Right ventricle myocardium inferior (tissue), 1 donor: ENCODE measurements at regions of chr1 and their contacts with region 1.

Region 1: DNA sequence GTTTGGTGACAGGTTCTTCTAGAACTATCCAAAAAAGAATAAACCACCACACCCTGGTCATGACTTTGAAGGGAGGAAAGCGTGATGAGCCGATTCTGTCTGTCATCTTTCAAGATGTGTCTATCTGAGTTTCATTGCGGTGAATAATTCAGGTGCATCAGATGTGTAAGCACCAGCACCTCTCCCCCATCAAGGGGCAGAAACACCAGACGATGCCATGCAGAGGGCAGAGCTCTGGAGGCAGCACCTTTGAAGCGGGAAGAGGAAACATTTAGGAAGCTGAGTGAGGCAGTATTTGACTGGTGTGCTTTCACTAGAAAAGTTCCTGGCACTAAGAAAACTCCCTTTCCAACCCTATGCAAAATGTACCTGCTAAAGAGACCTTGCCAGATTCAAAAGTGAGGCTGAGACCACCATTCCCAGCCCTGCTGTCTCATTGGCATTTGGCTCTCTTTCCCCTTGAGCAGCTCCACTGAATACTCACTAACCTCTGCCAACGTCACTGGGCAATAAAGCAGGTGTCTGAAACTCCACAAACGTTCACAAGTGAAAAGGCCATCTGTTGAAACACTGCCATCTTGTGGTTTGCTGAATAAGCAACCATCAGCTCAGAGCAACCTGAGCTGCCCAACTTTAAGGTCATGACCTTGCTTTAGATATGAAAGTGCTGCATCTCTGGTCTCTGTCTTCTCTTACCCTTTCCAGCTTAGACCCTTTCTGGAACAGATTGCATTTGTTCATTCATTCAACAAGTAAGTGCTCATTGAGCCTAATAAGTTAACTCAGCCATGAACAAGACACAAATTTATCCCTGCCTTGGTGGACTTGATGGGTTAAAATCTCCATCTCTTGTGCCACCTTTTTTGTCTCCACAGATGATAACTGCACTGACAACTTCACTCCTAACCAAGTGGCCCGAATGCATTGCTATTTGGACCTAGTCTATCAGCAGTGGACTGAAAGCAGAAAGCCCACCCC is 228.6 kb downstream of the PAPPA2 start:
- DNase-seq: no peak
- ATAC-seq: peak; percentile 53

Region 2: GRCh38 chr1:176374967-176375569 is 316.5 kb before region 1 on chr1:
- intact Hi-C with region 1: loop called (anchors 1 kb)
- DNase-seq: peak; percentile 78
- ATAC-seq: peak; percentile 56

Region 3: GRCh38 chr1:176559878-176560277 is 131.7 kb before region 1 on chr1:
- intact Hi-C with region 1: loop called (anchors 1 kb)
- DNase-seq: no peak
- ATAC-seq: peak; percentile 92

Region 4: GRCh38 chr1:176656257-176656995 is 35.1 kb before region 1 on chr1:
- intact Hi-C with region 1: loop called (anchors 1 kb)
- DNase-seq: no peak
- ATAC-seq: peak; percentile 98

Region 5: DNA sequence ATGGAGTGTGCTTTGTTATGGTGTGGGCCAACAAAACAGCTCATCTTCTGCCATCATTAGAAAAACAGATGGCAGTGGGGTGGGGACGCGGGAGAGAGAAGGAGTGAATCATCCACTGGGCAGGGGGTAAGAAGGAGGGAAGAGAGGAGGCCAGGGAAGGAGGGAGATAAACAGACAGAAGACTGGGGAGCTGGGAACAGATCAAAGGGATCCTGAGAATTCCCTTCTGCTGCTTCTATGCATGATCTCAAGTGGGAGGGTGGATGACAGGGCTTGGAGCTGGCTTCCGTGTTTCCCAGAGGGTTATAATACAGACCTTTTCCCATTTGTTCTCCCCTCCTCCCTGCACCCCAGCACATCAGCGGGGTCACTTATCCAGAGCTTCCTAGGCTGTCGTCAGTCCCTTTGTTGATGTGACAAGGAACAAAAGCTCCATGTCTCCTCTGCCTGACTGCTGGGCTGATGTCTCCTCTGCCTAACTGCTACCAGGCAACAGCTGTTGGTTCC is 110.0 kb after region 1 on chr1:
- intact Hi-C with region 1: loop called (anchors 2 kb)
- DNase-seq: no peak
- ATAC-seq: peak; percentile 58

Region 6: GRCh38 chr1:176843352-176844297 is 152.1 kb after region 1 on chr1:
- intact Hi-C with region 1: loop called (anchors 2 kb)
- DNase-seq: no peak
- ATAC-seq: peak; percentile 72

Region 7: DNA sequence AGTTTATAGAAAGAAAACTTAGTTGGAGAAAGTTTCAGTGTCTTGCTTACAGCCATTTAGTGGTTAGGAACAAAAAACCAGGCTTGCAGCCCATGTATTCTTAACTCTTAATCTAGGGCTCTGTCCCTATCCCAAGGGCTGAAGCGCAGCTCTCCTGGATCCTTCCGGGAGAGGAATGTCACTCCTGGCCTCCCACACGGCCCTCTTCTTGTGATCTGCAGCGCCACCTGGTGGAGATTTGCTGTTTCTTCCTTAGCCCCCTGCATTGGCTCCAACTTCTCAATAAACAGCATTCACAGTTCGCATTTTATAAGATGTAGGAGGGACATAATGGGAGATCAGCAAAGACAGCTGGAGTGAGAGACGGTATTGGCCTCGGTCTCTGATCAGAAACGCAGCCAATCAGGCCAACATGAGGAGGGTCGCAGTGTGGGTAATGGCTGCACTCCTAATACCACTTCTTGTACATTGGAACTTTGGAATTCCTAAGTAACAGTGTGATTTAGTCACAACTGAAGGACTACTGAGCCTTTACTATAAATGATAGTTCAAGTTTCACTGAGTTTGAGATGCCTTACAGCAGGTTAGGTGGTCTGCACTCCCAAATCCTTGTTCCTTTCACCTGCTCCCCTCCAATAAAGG is 189.5 kb after region 1 on chr1:
- intact Hi-C with region 1: loop called (anchors 5 kb)
- DNase-seq: peak; percentile 68
- ATAC-seq: peak; percentile 69